HEK293 (cell line): ENCODE measurements at regions of chr6 and their contacts with region 1.

Region 1: DNA sequence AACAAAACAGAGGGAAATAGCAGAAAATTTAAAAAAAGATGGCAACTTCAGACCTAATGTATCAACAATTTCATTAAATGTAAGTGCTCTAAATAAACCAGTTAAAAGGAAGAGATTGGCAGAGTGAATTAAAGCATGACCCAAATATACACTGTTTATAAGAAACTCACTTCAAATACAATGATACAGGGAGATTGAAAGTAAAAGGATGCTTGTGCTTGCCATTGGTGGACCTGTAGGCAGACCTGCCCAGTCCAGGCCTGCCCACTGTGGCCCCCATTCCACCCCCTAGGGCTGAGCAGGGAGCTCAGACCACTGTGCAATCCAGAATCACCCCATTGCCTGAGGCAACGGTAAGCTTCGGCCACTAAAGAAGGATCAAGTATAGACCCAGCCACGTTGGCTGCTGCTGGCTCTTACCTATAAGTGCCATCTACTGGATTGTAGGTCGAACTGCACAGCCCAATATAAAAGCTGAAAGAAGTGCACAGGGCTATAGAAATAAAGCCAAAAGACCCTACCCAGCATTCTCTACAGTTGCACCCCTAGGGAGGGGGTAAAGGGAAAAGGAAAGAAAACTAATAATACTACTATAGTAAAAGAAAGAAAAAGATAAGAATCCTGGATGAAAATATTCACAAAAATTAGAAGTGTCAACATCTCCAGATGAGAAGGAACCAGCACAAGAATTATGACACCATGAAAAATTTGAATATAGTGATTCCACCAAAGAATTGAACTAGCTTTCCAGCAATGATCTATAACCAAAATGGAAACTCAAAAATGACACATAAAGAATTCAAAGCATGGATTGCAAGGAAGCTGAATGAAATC is 36.1 kb downstream of the PSMB1 start:
- H3K4me3 ChIP-seq: no peak overlapping the region
- H3K27ac ChIP-seq: no peak overlapping the region
- H3K4me1 ChIP-seq: no peaks in the 10 kb centered on the region
- CTCF ChIP-seq: peak; percentile 61; the same call in 1 of the 2 replicates

Region 2: DNA sequence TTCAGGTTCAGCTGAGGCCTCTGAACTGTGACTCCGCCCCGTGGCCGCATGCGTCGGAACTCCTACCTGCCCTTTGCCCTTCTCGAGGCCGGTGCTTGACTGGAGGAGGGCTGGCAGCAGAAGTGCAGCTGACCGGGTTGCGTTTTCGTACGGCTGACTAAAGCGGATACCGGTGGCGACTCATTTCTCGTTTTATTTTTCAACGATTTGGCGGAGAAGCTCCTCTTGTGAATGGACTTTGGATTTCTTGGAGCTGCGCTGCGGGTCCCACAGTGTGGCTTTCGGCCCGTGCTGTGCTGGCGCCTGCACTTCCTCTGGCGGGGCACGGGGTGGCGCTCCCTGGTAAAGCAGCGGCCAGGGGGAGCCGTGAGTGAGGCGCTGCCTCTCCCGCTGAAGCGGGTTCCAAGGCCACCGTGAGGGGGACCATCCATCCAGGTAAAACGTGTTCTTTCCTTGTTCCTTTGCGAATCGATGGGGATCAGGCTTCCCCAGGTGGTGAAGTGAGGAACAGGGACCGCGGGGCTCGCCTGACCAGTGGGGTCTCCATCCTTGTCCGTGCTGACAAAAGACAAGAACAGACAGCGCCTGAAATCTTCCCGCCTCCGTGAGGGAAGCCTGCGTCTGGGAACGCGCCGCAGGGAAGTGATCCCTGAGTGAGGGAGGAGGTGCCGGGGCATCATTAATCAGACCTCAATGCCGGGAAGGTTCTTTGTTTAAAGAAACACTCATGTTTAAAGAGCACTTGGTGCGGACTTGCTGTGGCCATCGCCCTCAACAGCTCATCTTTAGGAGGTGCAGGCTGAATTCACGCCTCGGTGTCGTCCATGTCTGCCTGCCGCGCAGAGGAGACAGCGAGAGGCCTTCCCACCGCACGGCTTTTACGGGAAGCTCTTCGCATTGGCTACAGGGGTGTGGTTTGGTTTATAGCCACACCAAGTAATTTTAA is 726.7 kb before region 1 on chr6:
- CTCF ChIA-PET with region 1: interaction called, 22 read pairs
- POLR2A ChIA-PET with region 1: no interaction called
- H3K4me3 ChIP-seq: peak overlapping the region; percentile 43
- H3K27ac ChIP-seq: no peak overlapping the region; the same call in 1 of the 2 replicates
- H3K4me1 ChIP-seq: 0 out of 2 replicates have a peak, but pooled peaks cover 5% of the 10 kb centered on the region
- CTCF ChIP-seq: peak; percentile 98

Region 3: DNA sequence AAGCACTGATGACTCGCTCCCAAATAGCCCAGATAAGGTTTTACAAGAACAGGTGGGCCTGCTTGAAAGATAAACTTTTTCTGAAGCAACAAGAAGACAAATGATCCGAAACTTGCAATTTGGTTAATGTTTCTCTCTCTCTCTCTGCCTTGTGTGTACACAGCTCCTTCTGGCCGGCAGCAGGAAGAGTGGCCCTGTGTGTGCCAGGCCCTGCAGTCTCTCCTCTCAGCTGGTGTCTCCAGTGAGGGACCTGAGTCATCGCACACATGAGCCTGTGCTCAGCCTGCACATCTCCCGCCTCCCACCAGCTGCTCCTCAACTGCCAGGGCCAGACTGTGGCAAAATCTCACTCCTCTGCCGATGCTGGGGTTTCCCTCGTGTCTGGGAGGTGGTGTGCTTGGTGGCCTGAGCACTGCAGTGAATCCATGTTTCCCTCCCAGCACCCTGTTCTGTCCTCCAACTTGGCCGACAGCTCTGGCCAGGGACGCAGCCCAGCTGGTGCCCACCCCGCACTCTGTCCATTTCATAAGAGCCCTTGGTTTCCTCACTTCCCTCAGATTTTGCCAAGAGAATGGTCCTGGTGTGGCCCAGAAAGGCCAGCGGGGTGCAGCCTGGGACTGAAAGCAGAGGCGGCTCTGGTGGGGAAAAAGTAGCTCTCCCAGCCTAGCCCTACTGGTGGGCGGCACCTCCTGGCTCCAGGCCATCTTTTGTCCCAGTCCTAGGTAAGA is 716.2 kb before region 1 on chr6:
- CTCF ChIA-PET with region 1: interaction called, 10 read pairs
- POLR2A ChIA-PET with region 1: no interaction called
- H3K4me3 ChIP-seq: no peak overlapping the region
- H3K27ac ChIP-seq: peak overlapping the region; percentile 59; the same call in 1 of the 2 replicates
- H3K4me1 ChIP-seq: peaks cover 19% of the 10 kb centered on the region
- CTCF ChIP-seq: no peak

Region 4: GRCh38 chr6:169950558-169950957 is 566.4 kb before region 1 on chr6:
- CTCF ChIA-PET with region 1: interaction called, 10 read pairs
- POLR2A ChIA-PET with region 1: no interaction called
- H3K4me3 ChIP-seq: no peak overlapping the region
- H3K27ac ChIP-seq: no peak overlapping the region
- H3K4me1 ChIP-seq: no peaks in the 10 kb centered on the region
- CTCF ChIP-seq: no peak

Region 5: GRCh38 chr6:170291271-170292110 is 225.5 kb before region 1 on chr6:
- CTCF ChIA-PET with region 1: interaction called, 13 read pairs
- POLR2A ChIA-PET with region 1: no interaction called
- H3K4me3 ChIP-seq: peak overlapping the region; percentile 24
- H3K27ac ChIP-seq: peak overlapping the region; percentile 50; the same call in 1 of the 2 replicates
- H3K4me1 ChIP-seq: peaks cover 8% of the 10 kb centered on the region
- CTCF ChIP-seq: no peak

Region 6: DNA sequence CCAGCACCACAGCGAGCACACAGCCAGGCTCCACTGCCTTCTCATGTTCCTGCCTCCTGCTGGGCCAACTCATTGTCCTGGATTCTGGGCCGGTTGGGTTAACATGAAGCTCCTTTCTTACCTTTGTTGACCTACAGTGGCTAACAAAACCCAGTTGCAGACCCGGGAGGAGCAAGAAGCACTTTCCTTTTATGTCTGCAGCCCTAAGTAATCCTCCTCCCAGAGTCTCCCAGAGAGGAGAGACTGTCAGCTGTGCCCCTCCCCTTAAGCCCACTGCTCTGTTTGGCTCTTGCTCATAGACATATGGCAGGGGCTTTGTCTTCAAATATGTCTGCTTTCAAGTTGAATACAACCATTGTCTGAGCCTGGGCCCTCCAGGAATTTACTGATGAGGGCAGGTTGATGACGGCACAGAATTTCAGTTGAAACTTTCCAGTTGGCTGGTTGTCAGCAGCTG is 19.1 kb before region 1 on chr6:
- CTCF ChIA-PET with region 1: no interaction called
- POLR2A ChIA-PET with region 1: no interaction called
- H3K4me3 ChIP-seq: no peak overlapping the region
- H3K27ac ChIP-seq: no peak overlapping the region
- H3K4me1 ChIP-seq: no peaks in the 10 kb centered on the region
- CTCF ChIP-seq: no peak